ENCODE measurements at regions of chr4 and their contacts with region 1.

Region 1: GRCh38 chr4:149790172-149790907 is 25.3 kb downstream of the IQCM start:
- DNase-seq: no peak
- ATAC-seq: peak; percentile 57

Region 2: GRCh38 chr4:149884046-149884445 is 93.7 kb after region 1 on chr4:
- intact Hi-C with region 1: loop called (anchors 5 kb)
- DNase-seq: peak; percentile 32
- ATAC-seq: peak; percentile 68

Measured in Right ventricle myocardium inferior (tissue), 1 donor.